ENCODE measurements at regions of chr17 and their contacts with region 1.

Region 1: DNA sequence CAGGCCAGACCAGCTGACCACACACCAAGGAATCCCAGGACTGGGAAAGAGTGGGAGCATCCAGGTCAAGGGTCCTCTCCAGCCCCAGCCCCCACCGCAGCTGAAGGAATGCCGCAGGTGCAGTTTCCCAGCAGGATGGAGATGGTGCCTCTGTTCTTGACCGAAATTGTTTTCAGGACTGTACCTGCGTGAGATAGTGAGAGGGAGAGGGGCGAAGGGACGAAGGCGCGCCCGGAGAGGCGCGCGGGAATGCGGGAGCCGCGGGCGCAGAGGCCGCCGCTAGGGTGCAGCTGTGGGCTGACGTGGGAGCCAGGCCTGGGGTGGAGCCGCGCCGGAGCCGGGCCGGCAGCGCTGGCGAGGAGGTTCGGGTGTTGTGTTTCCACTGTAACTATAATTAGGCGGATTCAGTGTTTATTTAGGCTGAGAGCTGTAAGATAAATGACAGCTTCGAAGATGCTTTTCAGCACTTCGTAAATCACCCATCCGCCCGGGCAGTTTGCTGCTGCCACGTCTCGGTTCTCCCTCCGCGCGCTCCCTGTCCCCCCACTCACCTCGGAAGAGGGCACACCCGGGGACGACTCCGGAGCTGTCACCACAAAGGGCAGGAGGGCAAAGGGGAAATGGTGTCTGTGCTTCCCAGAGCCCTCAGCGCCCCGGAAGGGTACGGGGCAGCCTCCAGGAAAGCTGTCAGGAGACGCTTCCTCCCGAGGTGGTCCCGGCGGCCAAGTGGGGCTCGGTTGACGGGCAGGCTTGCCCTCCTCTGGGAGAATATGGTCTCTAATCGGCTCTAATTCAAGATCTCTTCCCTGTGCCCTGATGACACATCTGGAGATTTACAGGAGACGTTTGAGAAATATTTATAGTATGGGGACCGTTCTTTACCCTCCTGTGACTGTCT is 38.2 kb downstream of the HOXB1 start:
- H3K4me3 ChIP-seq: peak overlapping the region; percentile 10; the same call in 1 of the 2 replicates
- H3K27ac ChIP-seq: peak overlapping the region; percentile 97
- H3K4me1 ChIP-seq: peaks cover 27% of the 10 kb centered on the region
- CTCF ChIP-seq: peak; percentile 93

Region 2: DNA sequence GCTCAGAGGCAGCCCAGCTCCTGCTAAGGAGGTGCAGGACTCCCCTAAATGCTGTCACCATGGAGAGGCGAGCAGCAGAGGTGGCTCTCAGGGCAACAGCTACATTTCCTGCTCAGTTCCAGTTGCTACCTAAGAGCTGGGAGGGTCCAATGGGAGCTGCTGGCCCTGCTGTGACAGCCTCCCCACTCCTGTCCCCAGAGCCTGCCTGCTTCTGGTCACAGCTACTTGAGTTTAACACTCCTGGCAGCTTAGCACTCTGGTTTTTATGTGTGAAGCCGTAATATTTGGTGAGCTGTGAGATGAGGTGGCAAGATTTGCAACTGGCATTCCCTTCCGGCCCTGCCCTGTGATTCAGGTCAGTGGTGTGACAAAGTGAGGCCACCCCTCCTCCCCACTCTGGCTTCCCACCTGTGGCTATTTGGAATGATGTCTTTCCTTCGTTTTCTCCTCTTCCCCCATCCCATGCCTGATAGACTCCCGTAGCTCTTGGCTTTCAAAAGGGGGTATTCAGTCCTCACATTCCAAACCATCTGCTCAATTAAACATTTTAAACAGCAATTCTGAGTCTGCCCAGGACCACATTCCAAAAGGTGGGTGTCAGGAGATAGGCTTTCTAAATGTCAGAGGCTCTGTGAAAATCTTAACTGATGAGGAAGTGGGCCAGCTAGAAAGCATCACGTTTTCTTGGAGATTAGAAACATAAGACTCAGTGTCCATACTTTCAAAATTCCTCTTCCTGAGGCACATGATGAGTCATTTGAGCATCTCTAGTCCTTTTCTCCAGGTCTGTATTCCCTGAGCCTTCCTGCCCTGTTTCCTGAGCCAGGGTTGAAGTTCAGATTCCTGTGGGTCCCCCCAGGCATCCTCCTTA is 20.0 kb before region 1 on chr17:
- CTCF ChIA-PET with region 1: interaction called, 13 read pairs
- POLR2A ChIA-PET with region 1: no interaction called
- H3K4me3 ChIP-seq: no peak overlapping the region
- H3K27ac ChIP-seq: no peak overlapping the region; the same call in 1 of the 2 replicates
- H3K4me1 ChIP-seq: peaks cover 15% of the 10 kb centered on the region
- CTCF ChIP-seq: no peak

Region 3: DNA sequence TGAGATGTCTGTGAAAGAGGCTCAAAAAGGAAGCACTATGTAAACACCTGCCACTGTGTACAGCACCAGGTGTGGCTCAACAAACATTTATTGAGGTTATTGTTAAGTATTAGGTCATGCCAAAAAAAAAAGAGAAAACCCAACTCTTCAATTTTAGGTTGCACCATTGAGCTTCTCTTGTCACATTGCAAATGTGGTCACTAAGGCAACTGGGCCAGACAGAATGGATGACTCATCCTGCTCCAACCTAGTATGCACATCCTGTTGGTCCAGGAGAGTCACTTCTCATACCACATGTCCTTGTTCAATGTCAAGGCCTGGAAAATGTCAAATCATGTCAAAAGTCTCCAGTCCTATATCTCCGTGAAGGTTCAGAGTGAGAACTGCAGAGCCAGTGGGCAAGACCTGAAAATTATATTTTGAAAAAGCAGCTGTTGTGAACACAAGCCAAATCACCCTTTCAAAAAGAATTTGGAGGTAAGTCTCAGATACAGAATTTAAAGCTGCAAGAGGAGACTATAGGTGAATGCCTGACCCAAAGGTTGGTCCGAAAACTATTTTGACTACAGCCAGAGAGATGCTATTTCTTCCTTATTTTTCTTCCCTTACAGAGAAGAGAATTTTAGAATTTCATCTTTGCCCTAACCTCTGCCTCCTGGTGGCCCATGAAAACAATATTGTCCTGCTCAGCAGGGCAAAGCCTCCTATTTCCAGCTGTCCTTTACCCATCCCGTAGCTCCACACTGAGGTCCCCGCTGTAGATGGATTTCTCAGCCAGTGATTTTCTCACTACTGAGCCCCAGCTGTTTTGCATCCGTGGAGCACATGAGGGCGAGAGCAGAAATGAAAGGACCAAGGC is 13.4 kb after region 1 on chr17:
- CTCF ChIA-PET with region 1: interaction called, 36 read pairs
- POLR2A ChIA-PET with region 1: interaction called, 3 read pairs
- H3K4me3 ChIP-seq: no peak overlapping the region
- H3K27ac ChIP-seq: no peak overlapping the region; the same call in 1 of the 2 replicates
- H3K4me1 ChIP-seq: peaks cover 24% of the 10 kb centered on the region
- CTCF ChIP-seq: no peak

Region 4: DNA sequence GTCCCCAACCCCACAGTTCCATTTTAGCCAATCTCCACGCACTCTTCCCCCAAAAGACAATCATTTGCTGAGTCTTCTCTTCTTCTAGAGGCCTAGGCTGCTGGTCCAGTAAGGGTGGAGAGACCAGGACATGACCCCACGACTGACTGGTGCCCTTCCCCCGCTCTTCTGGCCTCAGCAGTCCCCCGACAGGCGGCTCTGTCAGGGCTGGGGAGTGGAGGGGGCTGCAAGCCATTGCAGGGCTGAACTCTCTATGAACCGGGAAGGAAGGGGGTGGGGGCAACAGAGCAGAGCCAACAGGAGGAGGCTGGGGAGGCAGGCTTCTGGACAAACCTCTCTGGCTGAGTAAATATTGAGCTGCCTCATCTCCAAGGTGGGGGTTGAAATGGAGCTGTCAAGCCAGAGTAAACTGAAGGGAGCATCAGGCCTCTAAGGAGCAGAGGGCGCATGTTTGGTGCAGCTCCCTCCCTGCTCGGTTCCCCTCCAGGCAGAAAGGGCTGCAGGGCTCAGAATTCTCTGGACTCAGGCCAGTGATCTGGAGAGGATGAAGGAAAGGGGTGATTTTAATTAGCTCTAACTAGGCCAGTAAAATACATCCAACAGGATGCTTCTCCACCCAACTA is 29.5 kb after region 1 on chr17:
- CTCF ChIA-PET with region 1: interaction called, 12 read pairs
- POLR2A ChIA-PET with region 1: no interaction called
- H3K4me3 ChIP-seq: no peak overlapping the region
- H3K27ac ChIP-seq: no peak overlapping the region; the same call in 1 of the 2 replicates
- H3K4me1 ChIP-seq: peaks cover 14% of the 10 kb centered on the region
- CTCF ChIP-seq: no peak

Region 5: GRCh38 chr17:48593840-48594537 is 101.3 kb after region 1 on chr17:
- CTCF ChIA-PET with region 1: interaction called, 13 read pairs
- POLR2A ChIA-PET with region 1: no interaction called
- H3K4me3 ChIP-seq: no peak overlapping the region; the same call in 1 of the 2 replicates
- H3K27ac ChIP-seq: peak overlapping the region; percentile 68
- H3K4me1 ChIP-seq: peaks cover 31% of the 10 kb centered on the region
- CTCF ChIP-seq: peak; percentile 98

Region 6: GRCh38 chr17:49343273-49343672 is 850.6 kb after region 1 on chr17:
- CTCF ChIA-PET with region 1: no interaction called
- POLR2A ChIA-PET with region 1: no interaction called
- H3K4me3 ChIP-seq: no peak overlapping the region
- H3K27ac ChIP-seq: no peak overlapping the region
- H3K4me1 ChIP-seq: peaks cover 15% of the 10 kb centered on the region
- CTCF ChIP-seq: no peak

Measured in HEK293 (cell line).